Endothelial cell of umbilical vein (primary cell): ENCODE measurements at regions of chr12 and their contacts with region 1.

Region 1: DNA sequence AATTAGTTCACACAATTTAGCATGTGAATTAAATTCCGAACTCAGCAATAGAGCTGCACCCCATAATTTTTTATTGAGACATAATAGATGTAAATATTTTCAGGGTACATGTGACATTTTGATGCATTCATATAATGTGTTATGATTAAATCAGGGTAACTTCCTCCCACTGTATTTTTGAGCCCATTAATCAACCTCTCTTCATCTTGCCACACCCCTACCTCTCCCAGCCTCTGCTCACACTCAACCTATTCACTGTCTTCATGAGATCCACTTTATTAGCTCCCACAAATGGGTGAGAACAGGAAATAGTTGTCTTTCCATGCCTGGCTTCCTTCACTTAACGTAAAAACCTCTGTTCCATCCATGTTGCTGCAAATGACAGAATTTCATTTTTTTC is 14.7 kb downstream of the IL26 start:
- DNase-seq: no peak
- H3K4me3 ChIP-seq: no peak overlapping the region
- H3K27ac ChIP-seq: no peak overlapping the region
- H3K4me1 ChIP-seq: no peaks in the 10 kb centered on the region
- H3K27me3 ChIP-seq: peaks cover 6 to 17% of the 10 kb centered on the region in 2 experiments
- CTCF ChIP-seq: no peak
- POLR2A ChIP-seq: no peak

Region 2: GRCh38 chr12:68223083-68223747 is 12.3 kb after region 1 on chr12:
- CTCF ChIA-PET with region 1: interaction called, 3 read pairs
- POLR2A ChIA-PET with region 1: interaction called, 15 read pairs
- dilution Hi-C with region 1: no loop called
- intact Hi-C with region 1: no loop called
- DNase-seq: peak; percentile 88
- H3K4me3 ChIP-seq: no peak overlapping the region
- H3K27ac ChIP-seq: no peak overlapping the region
- H3K4me1 ChIP-seq: peaks cover 6% of the 10 kb centered on the region
- H3K27me3 ChIP-seq: peaks cover 0 to 2% of the 10 kb centered on the region in 2 experiments
- CTCF ChIP-seq: peak; percentile 84 to 86
- POLR2A ChIP-seq: no peak

Region 3: DNA sequence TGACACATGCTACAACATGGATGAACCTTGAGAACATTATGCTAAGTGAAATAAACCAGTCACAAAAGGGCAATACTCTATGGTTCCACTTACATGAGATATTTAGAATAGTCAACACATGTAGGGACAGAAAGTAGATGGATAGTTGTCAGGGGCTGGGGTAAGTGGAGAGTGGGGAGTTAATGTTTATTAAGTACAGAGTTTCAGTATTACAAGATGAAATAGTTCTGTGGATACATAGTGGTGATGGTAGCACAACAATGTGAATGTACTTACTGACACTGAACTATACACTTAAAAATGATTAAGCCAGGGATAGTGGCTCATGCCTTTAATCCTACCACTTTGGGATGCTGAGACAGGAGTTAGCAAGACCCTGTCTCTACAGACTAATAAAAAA is 484.6 kb after region 1 on chr12:
- CTCF ChIA-PET with region 1: no interaction called
- POLR2A ChIA-PET with region 1: no interaction called
- dilution Hi-C with region 1: no loop called
- intact Hi-C with region 1: no loop called
- DNase-seq: no peak
- H3K4me3 ChIP-seq: no peak overlapping the region
- H3K27ac ChIP-seq: no peak overlapping the region
- H3K4me1 ChIP-seq: no peaks in the 10 kb centered on the region
- H3K27me3 ChIP-seq: no peaks in the 10 kb centered on the region
- CTCF ChIP-seq: no peak
- POLR2A ChIP-seq: no peak